ENCODE measurements at regions of chr11 and their contacts with region 1.

Region 1: DNA sequence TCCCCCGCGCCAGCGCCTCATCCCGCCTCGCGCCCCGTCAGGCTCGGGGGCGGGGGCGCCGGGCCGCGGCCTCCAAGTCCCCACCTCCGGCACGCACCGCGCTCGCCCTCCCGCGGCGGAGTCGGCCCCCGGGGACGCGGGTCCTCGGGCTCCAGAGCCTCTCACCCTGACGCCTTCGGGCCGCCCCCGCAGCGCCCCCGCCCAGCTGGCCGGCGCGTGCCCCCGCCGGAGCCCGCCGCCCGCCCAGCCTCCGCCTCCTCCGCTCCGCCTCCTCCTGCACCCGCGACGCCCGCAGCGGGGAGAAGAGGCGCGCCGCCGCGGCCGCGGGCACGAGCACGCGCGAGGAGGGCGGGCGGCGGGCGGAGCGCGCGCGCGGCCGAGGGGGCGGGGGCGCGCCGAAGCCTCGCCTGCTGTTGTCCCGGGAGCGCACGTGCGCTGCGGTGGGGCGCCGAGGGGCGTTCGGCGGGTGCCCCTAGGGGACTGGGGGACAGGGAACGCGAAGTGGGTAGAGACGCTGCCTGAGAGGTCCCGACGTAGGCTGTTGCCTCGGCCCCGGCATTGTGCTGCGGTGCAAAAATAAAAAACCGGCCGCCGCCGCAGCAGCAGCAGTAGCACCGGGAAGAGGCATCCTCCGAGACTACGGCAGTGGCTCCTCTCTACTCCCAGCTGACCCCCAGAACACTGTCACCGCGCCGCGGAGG is 87.4 kb upstream of the ARHGAP32 start:
- DNase-seq: peak; percentile 89
- H3K4me3 Mint-ChIP-seq: peak overlapping the region; percentile 92
- H3K27ac Mint-ChIP-seq: peak overlapping the region; percentile 83
- H3K4me1 Mint-ChIP-seq: peaks cover 65% of the 10 kb centered on the region
- H3K27me3 Mint-ChIP-seq: no peaks in the 10 kb centered on the region
- CTCF ChIP-seq: no peak

Region 2: DNA sequence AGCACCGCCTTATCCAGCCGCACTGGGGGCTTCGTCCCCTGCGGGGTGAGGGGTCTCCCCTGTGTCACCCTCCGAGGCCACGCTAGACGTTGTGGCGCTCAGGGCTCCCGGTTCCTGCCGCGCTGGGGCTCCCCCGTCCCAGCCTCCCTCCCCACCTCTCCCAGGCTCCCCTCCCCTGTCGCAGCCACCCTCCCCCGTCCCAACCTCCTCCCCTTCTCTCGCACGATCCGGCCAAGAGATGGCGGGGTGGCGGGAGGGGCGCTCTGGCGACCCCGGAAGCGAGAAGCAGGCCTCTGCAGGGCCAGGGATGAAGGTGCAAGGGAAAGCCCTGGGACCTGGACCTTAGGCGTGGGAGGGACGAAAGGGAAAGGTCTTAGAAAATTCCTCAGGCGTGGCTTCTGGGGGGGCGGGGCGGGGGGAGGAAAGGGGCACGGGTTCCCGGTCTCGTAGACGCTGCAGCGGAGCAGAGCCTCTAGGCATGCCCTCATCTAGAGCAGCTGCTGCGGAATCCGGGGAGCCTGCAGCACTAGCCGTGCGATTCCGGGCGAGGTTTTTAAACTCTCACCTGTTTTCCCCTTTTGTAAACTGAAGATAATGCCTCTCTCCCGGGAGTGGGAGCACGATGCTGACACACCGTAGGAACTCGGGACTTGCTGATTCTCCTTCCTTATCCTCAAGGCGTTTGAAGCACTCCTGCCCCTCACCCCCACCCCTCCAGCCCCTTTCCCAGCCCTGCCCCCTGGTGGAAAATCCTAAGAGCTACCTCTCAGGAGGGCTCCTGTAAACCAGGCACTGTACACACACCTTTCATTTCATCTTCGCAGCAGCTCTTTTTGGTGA is 373.9 kb before region 1 on chr11:
- CTCF ChIA-PET with region 1: no interaction called
- intact Hi-C with region 1: no loop called
- DNase-seq: peak; percentile 69
- H3K4me3 Mint-ChIP-seq: peak overlapping the region; percentile 72
- H3K27ac Mint-ChIP-seq: no peak overlapping the region
- H3K4me1 Mint-ChIP-seq: no peaks in the 10 kb centered on the region
- H3K27me3 Mint-ChIP-seq: no peaks in the 10 kb centered on the region
- CTCF ChIP-seq: peak; percentile 39

Region 3: GRCh38 chr11:129230006-129230405 is 49.5 kb before region 1 on chr11:
- CTCF ChIA-PET with region 1: no interaction called
- intact Hi-C with region 1: loop called (anchors 5 kb)
- DNase-seq: no peak
- H3K4me3 Mint-ChIP-seq: no peak overlapping the region
- H3K27ac Mint-ChIP-seq: no peak overlapping the region
- H3K4me1 Mint-ChIP-seq: peaks cover 15% of the 10 kb centered on the region
- H3K27me3 Mint-ChIP-seq: no peaks in the 10 kb centered on the region
- CTCF ChIP-seq: no peak

Region 4: GRCh38 chr11:129315781-129316481 is 36.5 kb after region 1 on chr11:
- CTCF ChIA-PET with region 1: interaction called, 4 read pairs
- intact Hi-C with region 1: loop called (anchors 5 kb)
- DNase-seq: peak; percentile 67
- H3K4me3 Mint-ChIP-seq: peak overlapping the region; percentile 30
- H3K27ac Mint-ChIP-seq: peak overlapping the region; percentile 93
- H3K4me1 Mint-ChIP-seq: peaks cover 56% of the 10 kb centered on the region
- H3K27me3 Mint-ChIP-seq: no peaks in the 10 kb centered on the region
- CTCF ChIP-seq: no peak